ENCODE measurements at regions of chr1 and their contacts with region 1.

Region 1: DNA sequence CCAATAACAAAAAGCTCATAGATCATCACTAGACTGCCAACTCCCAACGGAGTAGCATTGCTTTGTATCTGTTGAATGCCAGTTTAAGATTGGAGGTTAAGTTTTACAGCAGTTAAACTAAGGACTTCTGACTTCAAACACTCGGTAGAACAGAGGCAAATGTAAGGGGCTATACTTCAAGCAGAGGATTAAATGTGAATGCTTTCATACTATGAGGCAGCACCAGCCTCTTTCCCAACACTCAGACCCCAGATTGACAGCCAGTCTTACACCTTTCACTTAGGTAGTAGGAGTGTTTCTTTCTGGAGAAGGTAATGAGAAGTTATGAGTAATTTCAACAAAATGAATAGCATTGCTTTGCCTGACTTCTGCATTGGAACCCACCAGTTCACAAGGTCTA is 22.8 kb downstream of the OR10R2 start:
- DNase-seq: no peak
- H3K4me3 ChIP-seq: no peak overlapping the region
- H3K27ac ChIP-seq: no peak overlapping the region
- H3K4me1 ChIP-seq: no peaks in the 10 kb centered on the region
- H3K27me3 ChIP-seq: no peaks in the 10 kb centered on the region
- CTCF ChIP-seq: no peak
- POLR2A ChIP-seq: no peak

Region 2: DNA sequence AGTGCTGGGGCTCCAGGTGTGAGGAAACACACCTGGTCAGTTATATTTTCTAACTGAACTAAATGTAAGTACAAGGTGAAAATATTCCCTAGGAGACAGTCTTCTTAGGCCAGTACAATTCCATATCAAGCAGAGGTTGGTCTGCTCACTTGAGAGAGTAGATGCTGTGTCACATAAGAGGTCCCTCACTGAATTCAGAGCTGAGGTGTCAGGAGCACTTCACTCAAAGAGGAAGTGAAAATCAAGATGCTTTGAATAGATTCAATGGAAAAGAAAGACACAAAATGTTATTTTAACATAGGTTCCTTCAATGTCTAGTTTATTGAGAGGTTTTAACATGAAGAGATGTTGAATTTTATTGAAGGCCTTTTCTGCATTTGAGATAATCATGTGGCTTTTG is 789.9 kb before region 1 on chr1:
- intact Hi-C with region 1: loop called (anchors 5 kb)
- DNase-seq: no peak
- H3K4me3 ChIP-seq: no peak overlapping the region
- H3K27ac ChIP-seq: no peak overlapping the region
- H3K4me1 ChIP-seq: no peaks in the 10 kb centered on the region
- H3K27me3 ChIP-seq: no peaks in the 10 kb centered on the region
- CTCF ChIP-seq: no peak
- POLR2A ChIP-seq: no peak

Region 3: DNA sequence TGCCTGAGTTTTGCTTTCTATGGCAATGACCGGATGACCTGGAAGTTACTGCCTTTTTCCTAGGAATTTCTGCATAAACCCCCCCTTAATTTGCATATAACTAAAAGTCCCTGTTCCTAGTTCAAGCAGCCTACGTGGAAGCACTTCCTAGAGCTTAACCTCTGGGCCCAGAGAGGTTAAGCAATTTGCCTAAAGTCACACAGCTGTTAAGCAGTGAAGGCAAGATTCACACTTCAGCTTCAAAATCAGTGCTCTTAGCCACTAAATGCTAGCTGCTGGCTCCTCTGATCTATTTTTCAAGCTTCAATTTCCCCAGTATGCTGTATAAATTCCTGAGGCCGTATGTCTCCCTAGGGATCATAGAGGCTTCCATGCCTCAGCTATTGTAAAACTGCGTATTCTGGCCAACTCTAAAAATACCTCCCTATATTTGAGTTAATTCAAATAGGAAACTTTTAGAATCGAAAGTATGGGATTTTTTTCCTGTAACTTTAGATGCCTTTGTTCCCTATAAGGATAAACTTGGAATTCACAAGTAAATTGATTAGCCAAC is 600.1 kb before region 1 on chr1:
- intact Hi-C with region 1: no loop called
- DNase-seq: no peak
- H3K4me3 ChIP-seq: no peak overlapping the region
- H3K27ac ChIP-seq: no peak overlapping the region
- H3K4me1 ChIP-seq: no peaks in the 10 kb centered on the region
- H3K27me3 ChIP-seq: no peaks in the 10 kb centered on the region
- CTCF ChIP-seq: no peak
- POLR2A ChIP-seq: no peak

Region 4: GRCh38 chr1:158534496-158534895 is 39.7 kb after region 1 on chr1:
- intact Hi-C with region 1: no loop called
- DNase-seq: no peak
- H3K4me3 ChIP-seq: no peak overlapping the region
- H3K27ac ChIP-seq: no peak overlapping the region
- H3K4me1 ChIP-seq: no peaks in the 10 kb centered on the region
- H3K27me3 ChIP-seq: no peaks in the 10 kb centered on the region
- CTCF ChIP-seq: no peak
- POLR2A ChIP-seq: no peak

Measured in breast epithelium (tissue), 4 donors.